Cardiac septum (tissue), 1 donor: ENCODE measurements at regions of chr5 and their contacts with region 1.

Region 1: DNA sequence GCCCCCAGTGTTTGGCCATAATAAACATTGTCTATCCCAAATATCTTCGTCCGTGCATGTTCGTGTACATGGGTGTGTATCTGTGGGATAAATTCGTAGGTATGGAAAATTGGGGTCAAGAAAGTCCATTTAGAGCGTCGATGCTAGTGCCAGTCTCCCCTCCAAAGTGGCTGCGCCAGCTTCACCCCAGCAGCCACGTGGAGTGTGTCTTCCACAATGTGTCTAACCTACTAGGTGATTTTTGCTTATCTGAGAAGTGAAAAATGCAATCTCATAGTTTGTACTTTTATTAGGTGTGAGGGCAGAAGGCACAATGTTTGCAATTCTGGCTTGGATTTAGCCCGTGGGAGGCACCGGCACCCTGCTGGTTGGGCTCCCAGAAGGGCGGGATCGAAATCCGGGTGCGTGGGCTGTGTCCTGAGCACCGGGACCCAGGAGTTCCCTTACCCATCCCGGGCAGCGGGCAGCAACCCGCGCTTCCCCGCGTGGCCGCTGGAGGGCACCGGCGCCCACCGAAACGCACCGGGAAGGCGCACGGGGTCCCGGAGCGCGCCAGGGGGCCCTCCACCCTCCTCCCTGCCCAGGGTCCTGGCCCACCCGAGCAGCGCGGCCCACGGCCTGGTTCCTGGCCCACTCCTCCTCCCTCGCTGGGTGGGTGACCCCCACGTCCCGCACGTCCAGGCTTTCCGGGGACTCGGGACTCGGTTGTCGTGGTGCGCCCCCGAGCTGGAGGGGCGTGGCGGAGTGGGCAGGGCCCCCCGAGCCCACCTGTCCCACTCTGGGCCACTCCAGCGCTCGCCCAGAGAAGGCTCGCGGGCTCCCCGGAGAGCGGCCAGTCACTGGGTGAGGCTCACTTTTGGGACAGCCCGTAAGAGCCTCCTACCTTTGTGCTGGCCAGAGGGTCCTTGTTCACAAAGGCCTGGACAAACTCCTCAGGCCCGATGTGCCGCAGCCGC is 55.4 kb upstream of the RNF130 start:
- DNase-seq: peak; percentile 75

Region 2: GRCh38 chr5:180209137-180209581 is 82.2 kb after region 1 on chr5 and contains the start of gene RASGEF1C:
- intact Hi-C with region 1: loop called (anchors 5 kb)
- DNase-seq: no peak
- total RNA-seq, gene RASGEF1C: 0.40 TPM

Region 3: DNA sequence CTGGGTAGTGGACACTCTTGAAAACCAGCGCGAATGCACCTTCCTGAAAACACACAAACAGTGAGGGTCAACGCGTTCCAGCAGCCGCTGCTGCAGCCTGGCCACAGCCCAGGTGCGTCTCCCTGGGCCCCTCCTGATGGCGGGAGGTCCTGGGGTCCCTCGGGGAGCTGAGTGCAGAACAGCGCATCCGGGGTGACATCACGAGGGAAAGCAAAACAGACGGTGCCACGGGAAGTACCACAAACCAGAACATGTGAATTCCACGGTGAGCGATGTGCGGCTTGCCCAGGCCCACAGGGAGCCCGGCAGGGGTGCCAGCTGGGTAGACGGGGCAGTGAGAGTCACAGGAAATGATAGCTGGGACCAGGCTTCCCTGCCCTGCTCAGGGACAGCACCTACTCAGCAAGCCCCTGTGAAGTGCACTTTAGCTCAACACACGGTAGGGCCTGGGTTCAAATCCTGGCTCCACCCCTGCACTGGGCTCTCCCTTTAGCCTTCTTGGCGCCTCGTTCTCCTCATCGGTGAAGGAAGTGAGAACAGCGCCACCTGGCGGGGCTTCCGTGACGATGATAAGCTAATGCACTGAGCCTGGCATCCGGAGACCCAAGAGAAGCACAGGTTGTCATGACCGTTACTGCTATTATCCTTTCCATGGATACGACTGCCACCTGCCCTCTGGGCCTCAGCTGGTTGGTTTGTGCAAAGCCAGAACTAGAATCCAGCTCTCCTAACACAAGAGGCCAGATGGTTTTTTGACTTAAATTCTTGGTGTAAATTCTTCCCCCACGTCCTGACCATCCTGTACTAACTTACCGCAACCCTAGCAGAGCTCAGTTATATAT is 201.5 kb after region 1 on chr5:
- intact Hi-C with region 1: loop called (anchors 5 kb)
- DNase-seq: peak; percentile 90

Region 4: GRCh38 chr5:180470966-180471582 is 344.1 kb after region 1 on chr5:
- intact Hi-C with region 1: loop called (anchors 5 kb)
- DNase-seq: peak; percentile 85